ENCODE measurements at regions of chr1 and their contacts with region 1.

Region 1: DNA sequence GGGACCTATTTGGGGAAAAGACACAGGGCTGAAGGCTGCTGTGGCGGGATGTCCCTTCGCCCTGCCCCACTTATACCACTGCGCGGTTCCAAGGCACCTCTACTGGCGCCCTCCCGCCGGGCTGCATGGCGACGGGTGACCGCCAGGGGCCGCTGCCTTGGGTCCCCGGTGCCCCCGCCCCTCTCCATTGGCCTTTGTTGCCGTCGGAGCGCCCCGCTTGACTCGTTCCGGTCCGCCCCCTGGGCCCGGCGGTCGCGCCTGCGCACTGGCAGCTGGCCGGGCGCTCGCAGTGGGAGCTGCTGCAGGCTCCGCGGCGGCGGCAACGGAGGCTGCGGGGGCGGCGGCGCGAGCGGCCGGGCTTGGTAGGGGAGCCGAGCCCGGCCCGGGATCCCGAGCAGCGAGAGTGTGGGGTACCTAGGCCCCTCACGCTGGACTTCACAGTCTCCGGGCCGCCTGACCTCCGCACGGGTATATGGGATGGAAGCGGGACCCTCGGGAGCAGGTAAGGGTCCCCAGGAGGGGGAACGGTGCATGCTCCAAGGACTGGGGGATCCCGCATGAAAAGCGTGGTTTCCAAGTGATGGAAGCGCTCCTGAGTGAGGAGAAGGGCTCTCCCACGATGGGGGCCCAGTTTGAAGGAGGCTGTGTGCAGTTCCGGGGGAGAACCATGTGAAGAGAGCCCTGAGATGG is at the start of gene AGO1:
- DNase-seq: peak; percentile 98
- ATAC-seq: peak; percentile 96
- H3K4me3 Mint-ChIP-seq: peak within 1 kb of the TSS; percentile 95
- H3K27ac Mint-ChIP-seq: peak within 1 kb of the TSS; percentile 80
- H3K4me1 Mint-ChIP-seq: peaks cover 47% of the 10 kb centered on the region
- H3K27me3 Mint-ChIP-seq: peaks cover 4% of the 10 kb centered on the region
- CTCF ChIP-seq: peak; percentile 52
- total RNA-seq, gene AGO1: 30.3 and 34.3 TPM in 2 replicates

Region 2: DNA sequence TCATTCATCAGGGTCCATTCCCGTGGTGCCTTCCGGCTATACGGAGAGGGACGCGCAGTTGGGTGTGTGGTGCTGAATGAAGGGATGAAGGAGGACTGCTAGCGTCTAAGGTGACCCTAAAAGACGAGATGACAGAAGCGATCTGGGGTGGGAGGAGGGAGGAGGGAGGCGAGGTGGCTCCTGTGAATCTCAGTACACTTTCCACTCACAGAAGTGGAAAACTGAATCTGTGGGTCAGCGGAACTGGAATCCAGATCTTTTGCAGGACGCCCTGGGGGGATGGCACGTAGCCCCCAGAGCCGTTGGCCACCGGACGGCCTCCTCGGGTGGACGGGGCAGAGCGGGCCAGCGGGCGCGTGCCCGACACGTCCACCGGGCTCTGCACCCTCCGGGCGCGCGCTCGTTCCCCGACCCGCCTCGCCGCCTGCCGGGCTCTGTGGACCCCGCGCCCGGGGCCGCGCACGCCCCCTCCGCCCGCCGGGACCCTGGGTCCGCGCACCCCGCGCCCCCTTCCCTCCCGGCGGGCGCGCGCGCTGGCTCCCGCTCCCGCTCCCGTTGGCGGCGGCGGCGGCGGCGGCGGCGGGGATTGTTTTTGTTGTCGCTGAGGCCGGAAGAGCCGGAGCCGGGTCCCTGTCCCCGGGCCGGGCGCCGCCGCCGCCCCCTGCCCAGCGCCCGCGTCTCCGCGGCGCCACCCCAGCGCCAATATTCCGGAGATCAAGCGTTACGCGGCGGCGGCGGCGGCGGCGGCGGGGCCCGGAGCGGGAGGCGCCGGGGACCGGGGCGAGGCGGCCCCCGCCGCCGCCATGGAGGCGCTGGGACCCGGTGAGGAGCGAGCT is 75.3 kb before region 1 on chr1 and contains the start of gene AGO4:
- CTCF ChIA-PET with region 1: interaction called, 4 read pairs
- POLR2A ChIA-PET with region 1: no interaction called
- intact Hi-C with region 1: loop called (anchors 5 kb)
- DNase-seq: peak; percentile 52
- ATAC-seq: peak; percentile 59
- H3K4me3 Mint-ChIP-seq: peak within 1 kb of the TSS; percentile 92
- H3K27ac Mint-ChIP-seq: peak within 1 kb of the TSS; percentile 76
- H3K4me1 Mint-ChIP-seq: peaks cover 39% of the 10 kb centered on the region
- H3K27me3 Mint-ChIP-seq: no peaks in the 10 kb centered on the region
- CTCF ChIP-seq: no peak
- total RNA-seq, gene AGO4: 12.2 and 14.4 TPM in 2 replicates

Region 3: GRCh38 chr1:35857830-35858229 is 25.3 kb before region 1 on chr1:
- CTCF ChIA-PET with region 1: no interaction called
- POLR2A ChIA-PET with region 1: no interaction called
- intact Hi-C with region 1: no loop called
- DNase-seq: no peak
- ATAC-seq: no peak
- H3K4me3 Mint-ChIP-seq: no peak overlapping the region
- H3K27ac Mint-ChIP-seq: no peak overlapping the region
- H3K4me1 Mint-ChIP-seq: no peaks in the 10 kb centered on the region
- H3K27me3 Mint-ChIP-seq: no peaks in the 10 kb centered on the region
- CTCF ChIP-seq: no peak

Region 4: DNA sequence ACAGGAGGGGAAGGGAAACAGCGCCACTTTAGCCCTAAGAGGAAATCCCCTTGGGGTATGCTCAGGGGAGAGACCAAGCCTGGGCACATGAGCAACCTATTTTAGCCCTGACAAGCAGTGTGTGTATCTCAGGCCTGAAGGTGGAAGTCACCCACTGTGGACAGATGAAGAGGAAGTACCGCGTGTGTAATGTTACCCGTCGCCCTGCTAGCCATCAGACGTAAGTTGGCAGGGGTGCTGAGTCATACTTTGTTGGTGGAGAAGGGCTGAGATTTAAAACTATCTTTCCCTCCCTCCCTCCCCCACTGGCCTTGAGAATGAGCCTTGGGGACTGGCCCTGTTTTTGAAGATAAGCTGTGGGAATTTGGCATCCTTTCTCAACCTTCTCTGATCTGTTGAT is 11.1 kb after region 1 on chr1:
- CTCF ChIA-PET with region 1: interaction called, 7 read pairs
- POLR2A ChIA-PET with region 1: interaction called, 20 read pairs
- intact Hi-C with region 1: loop called (anchors 1 kb)
- DNase-seq: peak; percentile 39
- ATAC-seq: peak; percentile 99
- H3K4me3 Mint-ChIP-seq: peak overlapping the region; percentile 25
- H3K27ac Mint-ChIP-seq: peak overlapping the region; percentile 92
- H3K4me1 Mint-ChIP-seq: peaks cover 32% of the 10 kb centered on the region
- H3K27me3 Mint-ChIP-seq: no peaks in the 10 kb centered on the region
- CTCF ChIP-seq: no peak

Region 5: DNA sequence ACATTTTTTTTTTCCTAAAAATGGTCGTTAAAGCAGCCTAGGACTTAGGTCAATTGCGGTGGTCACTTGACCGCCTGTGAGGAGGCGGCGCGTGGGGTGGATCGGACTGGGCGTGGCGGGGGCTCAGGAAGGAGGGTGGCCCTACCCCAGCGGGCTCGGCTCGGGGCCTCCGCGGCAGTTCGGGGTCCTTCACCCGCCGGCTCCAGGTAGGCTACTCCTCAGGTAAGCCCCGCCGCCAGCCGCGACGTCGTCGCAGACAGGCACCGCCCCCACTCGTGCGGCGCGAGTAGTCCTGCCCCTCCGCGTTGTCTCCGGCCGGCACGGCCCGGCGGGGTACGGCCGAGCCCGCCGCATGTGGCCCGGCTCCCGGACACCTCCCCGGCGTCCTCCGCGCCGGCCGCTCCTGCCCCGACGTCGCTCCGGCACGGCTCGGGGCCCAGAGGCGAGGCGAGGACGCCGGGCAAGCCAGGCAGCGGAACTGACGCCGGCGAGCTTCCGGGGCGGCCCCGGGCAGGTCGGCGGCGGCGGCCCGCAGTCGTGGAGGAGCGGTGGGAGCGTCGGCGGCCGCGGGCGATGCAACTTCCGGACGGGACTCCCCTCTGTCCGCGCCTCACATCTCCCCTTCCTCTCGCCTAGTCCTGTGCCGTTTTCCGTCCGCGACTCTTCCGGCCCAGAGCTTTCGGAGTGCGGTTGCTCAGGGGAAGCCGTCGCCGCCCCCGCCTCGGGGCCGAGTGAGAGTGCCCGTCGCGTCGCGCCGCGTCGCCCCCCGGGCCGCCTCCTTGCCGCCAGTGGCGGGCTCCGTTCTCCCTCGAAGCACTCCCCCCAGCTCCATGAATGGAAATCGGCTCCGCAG is 47.7 kb after region 1 on chr1 and contains the start of gene AGO3:
- CTCF ChIA-PET with region 1: interaction called, 5 read pairs
- POLR2A ChIA-PET with region 1: interaction called, 25 read pairs
- intact Hi-C with region 1: loop called (anchors 1 kb)
- DNase-seq: peak; percentile 86
- ATAC-seq: peak; percentile 91
- H3K4me3 Mint-ChIP-seq: peak within 1 kb of the TSS; percentile 91
- H3K27ac Mint-ChIP-seq: peak within 1 kb of the TSS; percentile 91
- H3K4me1 Mint-ChIP-seq: peaks cover 28% of the 10 kb centered on the region
- H3K27me3 Mint-ChIP-seq: no peaks in the 10 kb centered on the region
- CTCF ChIP-seq: no peak
- total RNA-seq, gene AGO3: 30.7 and 37.2 TPM in 2 replicates

Region 6: DNA sequence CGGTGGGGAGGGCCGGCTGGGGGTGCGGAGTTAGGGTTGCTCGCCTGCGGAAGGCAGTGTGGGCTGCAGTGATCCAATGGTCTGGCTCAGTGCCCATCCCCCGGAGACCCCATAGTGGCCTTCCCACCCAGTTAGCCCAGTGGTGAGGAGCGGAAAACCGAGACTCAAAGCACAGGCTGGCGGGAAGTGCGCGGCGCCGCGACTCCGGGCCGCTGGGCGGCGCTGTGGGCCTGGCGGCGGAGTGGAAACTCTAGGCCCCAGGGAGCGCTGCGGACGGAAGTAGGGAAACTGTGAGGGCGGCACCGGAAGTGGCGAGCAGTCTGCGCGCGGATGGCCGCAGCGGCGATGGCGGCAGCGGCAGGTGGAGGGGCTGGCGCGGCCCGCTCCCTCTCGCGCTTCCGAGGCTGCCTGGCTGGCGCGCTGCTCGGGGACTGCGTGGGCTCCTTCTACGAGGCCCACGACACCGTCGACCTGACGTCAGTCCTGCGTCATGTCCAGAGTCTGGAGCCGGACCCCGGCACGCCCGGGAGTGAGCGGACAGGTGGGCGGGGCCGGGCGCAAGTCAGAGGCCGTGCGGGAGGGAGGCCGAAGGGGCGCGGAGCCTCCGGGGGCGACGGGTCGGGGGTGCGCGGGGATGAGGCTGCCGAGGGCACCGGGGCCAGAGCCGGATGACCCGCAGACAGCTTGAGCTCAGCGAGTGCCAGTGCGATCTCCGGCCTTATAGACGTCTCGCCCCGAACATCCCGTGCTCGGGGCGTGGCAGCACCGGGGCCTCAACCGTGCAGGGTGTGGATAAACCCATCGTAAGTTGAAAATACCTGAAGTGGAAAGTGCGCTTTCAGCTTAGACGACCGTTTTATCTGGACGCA is 205.7 kb after region 1 on chr1 and contains the start of gene ADPRS:
- CTCF ChIA-PET with region 1: interaction called, 3 read pairs
- POLR2A ChIA-PET with region 1: no interaction called
- intact Hi-C with region 1: loop called (anchors 1 kb)
- DNase-seq: peak; percentile 90
- ATAC-seq: peak; percentile 85
- H3K4me3 Mint-ChIP-seq: peak within 1 kb of the TSS; percentile 89
- H3K27ac Mint-ChIP-seq: peak within 1 kb of the TSS; percentile 88
- H3K4me1 Mint-ChIP-seq: peaks cover 17% of the 10 kb centered on the region
- H3K27me3 Mint-ChIP-seq: peaks cover 18% of the 10 kb centered on the region
- CTCF ChIP-seq: no peak
- total RNA-seq, gene ADPRS: 23.0 and 23.9 TPM in 2 replicates

Region 7: GRCh38 chr1:36175137-36176095 is 292.3 kb after region 1 on chr1:
- CTCF ChIA-PET with region 1: no interaction called
- POLR2A ChIA-PET with region 1: no interaction called
- intact Hi-C with region 1: no loop called
- DNase-seq: no peak
- ATAC-seq: peak; percentile 42
- H3K4me3 Mint-ChIP-seq: no peak overlapping the region
- H3K27ac Mint-ChIP-seq: peak overlapping the region; percentile 35
- H3K4me1 Mint-ChIP-seq: peaks cover 13% of the 10 kb centered on the region
- H3K27me3 Mint-ChIP-seq: no peaks in the 10 kb centered on the region
- CTCF ChIP-seq: no peak

Region 8: GRCh38 chr1:36306902-36307456 is 423.9 kb after region 1 on chr1:
- CTCF ChIA-PET with region 1: no interaction called
- POLR2A ChIA-PET with region 1: no interaction called
- intact Hi-C with region 1: loop called (anchors 10 kb)
- DNase-seq: peak; percentile 94
- ATAC-seq: peak; percentile 98
- H3K4me3 Mint-ChIP-seq: peak overlapping the region; percentile 97
- H3K27ac Mint-ChIP-seq: peak overlapping the region; percentile 88
- H3K4me1 Mint-ChIP-seq: peaks cover 40% of the 10 kb centered on the region
- H3K27me3 Mint-ChIP-seq: no peaks in the 10 kb centered on the region
- CTCF ChIP-seq: no peak

Measured in activated B cell treated with CpG ODN at 0.5 μM for 24 hours (primary cell).